Prostate gland (tissue), 2 donors: ENCODE measurements at regions of chr1 and their contacts with region 1.

Region 1: GRCh38 chr1:88549536-88549935 is 134.5 kb upstream of the PKN2 start:
- DNase-seq: no peak
- H3K4me3 ChIP-seq: no peak overlapping the region
- H3K27ac ChIP-seq: no peak overlapping the region
- H3K4me1 ChIP-seq: no peaks in the 10 kb centered on the region
- H3K27me3 ChIP-seq: no peaks in the 10 kb centered on the region
- CTCF ChIP-seq: peak in 3 of 4 experiments; percentile 9 to 17 (median 12)
- POLR2A ChIP-seq: no peak

Region 2: DNA sequence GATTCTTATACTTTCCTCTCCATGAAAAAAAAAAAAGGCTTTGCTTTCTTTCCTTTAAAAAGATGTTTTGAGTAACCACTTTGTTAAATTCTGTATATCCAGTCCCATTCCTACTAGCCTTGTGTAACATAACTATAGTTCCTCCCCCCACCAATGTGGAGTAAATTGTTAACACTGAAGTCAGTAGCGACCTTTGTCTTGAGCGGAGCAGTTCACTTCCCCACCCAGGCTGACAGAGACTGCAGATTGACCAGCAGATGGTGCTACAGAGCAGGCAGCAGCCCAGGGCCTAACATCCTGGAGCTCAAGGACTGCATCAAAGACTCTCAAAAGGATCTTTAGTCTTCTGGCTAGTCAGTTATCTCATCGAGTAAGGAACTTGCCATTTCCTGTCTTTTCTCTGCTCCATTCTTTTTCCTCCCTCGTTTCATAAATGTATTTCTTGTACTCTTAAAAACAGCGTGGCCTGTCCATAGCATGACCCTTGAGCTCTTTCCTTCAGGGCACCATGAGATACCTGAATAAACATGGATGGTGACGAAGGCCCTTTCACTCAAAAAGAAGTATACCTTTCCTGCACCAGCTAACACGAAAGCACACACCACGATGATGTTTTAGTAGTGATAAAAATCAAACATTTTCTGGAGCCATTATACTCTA is 369.0 kb before region 1 on chr1:
- intact Hi-C with region 1: loop called (anchors 5 kb)
- DNase-seq: peak; percentile 38
- H3K4me3 ChIP-seq: no peak overlapping the region
- H3K27ac ChIP-seq: no peak overlapping the region
- H3K4me1 ChIP-seq: no peaks in the 10 kb centered on the region
- H3K27me3 ChIP-seq: no peaks in the 10 kb centered on the region
- CTCF ChIP-seq: peak; percentile 70 to 78 (median 73)
- POLR2A ChIP-seq: no peak

Region 3: GRCh38 chr1:88433541-88433940 is 116.0 kb before region 1 on chr1:
- intact Hi-C with region 1: no loop called
- DNase-seq: no peak
- H3K4me3 ChIP-seq: no peak overlapping the region
- H3K27ac ChIP-seq: no peak overlapping the region
- H3K4me1 ChIP-seq: no peaks in the 10 kb centered on the region
- H3K27me3 ChIP-seq: no peaks in the 10 kb centered on the region
- CTCF ChIP-seq: no peak
- POLR2A ChIP-seq: no peak

Region 4: GRCh38 chr1:88462488-88463261 is 86.9 kb before region 1 on chr1:
- intact Hi-C with region 1: loop called (anchors 5 kb)
- DNase-seq: no peak
- H3K4me3 ChIP-seq: peak overlapping the region; percentile 18 to 30
- H3K27ac ChIP-seq: peak overlapping the region; percentile 52 to 69
- H3K4me1 ChIP-seq: no peaks in the 10 kb centered on the region
- H3K27me3 ChIP-seq: no peaks in the 10 kb centered on the region
- CTCF ChIP-seq: no peak
- POLR2A ChIP-seq: no peak

Region 5: GRCh38 chr1:88618331-88618730 is 68.8 kb after region 1 on chr1:
- intact Hi-C with region 1: no loop called
- DNase-seq: no peak
- H3K4me3 ChIP-seq: no peak overlapping the region
- H3K27ac ChIP-seq: no peak overlapping the region
- H3K4me1 ChIP-seq: no peaks in the 10 kb centered on the region
- H3K27me3 ChIP-seq: no peaks in the 10 kb centered on the region
- CTCF ChIP-seq: no peak
- POLR2A ChIP-seq: no peak

Region 6: DNA sequence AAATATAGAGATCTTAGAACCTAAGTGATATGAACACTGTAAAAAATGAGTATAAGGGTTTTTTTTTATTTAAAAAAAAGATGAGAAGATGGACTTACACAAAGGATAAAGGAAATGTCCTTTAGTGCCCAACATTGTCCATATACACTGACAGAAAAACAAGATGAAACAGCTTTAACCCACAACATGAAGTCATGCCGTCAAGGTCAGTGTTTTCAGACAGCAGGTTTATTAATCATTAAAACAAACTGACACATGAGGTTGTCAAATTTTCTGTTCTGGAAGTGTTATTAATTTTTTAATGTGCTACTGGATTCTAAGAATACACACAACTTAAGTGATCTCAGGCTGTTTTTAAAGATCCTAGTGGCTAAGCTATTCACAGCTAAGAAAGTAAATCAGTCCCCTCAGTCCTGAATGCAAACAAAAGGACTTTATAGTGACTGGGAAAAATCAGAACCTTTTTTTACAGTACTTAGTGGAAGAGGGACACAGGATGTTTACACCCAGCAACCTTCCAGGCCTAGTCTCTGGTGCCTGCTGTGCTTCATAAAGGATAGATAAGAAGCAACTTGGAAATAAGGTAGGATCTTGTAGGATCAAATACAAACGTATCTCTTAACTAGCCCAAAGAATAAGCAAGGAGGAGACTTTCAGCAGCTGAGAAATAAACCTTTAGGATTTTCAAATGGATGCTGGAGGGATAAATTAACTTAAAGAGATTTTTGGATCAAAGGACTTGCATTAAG is 112.6 kb after region 1 on chr1:
- intact Hi-C with region 1: no loop called
- DNase-seq: no peak
- H3K4me3 ChIP-seq: no peak overlapping the region
- H3K27ac ChIP-seq: no peak overlapping the region
- H3K4me1 ChIP-seq: no peaks in the 10 kb centered on the region
- H3K27me3 ChIP-seq: no peaks in the 10 kb centered on the region
- CTCF ChIP-seq: no peak
- POLR2A ChIP-seq: no peak